Activated CD4-positive, alpha-beta T cell treated with anti-CD3 and anti-CD28 coated beads for 36 hours (primary cell): ENCODE measurements at regions of chr3 and their contacts with region 1.

Region 1: DNA sequence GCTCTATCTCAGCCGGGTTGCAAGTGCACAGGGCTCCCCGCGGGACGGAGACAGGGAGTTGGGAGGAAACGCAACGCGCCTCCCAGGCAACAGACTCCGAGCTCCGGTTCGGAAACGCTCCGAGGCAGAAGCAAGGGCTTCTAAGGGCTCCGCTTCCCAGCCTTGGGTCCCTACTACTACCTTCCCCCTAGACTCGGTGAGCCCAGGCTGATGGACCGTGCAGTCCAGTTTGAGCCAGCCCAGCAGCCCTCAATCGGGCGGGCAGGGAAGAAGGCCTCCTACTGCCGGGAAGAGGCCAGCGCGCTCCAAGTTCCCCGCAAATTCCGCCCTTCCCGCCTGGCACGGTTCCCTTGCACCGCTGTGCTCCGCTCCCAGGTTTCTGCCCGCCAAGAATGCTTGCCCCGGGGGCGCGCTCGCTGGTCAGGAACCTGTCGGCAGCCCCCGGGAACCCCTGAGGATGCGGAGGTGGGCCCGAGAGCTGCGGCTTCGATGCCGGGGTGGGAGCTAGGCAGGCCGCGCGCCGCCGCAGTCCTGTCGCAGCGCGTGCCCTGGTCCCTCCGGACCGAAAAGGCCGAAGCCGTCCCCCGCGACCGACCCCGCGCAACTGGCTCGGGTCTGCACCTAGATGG is 728 bp downstream of the TRANK1 start:
- DNase-seq: peak; percentile 55
- ATAC-seq: peak; percentile 45
- H3K4me3 Mint-ChIP-seq: peak overlapping the region; percentile 75
- H3K27ac Mint-ChIP-seq: peak overlapping the region; percentile 51
- H3K4me1 Mint-ChIP-seq: peaks cover 11% of the 10 kb centered on the region
- H3K27me3 Mint-ChIP-seq: no peaks in the 10 kb centered on the region

Region 2: DNA sequence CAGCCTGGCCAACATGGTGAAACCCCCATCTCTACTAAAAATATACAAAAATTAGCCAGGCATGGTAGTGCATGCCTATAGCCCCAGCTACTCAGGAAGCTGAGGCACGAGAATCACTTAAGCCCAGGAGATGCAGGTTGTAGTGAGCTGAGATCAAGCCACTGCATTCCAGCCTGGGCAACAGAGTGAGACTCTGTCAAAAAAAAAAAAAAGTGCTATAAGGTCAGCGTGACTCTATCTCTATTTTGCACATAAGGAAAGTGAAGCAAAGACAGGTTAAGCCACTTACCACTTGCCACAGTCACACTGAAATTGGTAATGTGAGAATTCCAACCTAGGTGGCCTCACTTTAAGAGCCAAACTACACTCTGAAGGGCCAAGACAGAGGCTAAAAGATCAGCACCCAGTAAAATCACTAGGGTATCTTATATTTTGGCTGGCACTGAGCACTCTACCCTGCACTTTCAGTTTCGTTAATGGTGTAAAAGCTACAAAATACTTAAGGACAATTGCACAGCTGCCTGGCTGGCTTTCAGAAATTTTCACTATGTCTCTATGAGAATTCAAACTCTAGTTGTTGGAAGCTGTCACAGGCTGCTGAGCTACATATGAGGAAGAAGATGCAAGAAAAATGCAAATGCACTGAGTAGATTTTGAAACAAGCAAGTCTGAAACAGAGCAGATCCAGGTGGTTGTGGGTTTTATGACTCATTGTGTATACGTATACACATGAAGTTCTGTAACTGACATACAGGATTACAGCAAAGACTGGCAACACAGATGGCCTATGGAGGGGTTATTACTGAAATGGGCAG is 31.9 kb before region 1 on chr3:
- CTCF ChIA-PET with region 1: interaction called, 3 read pairs
- POLR2A ChIA-PET with region 1: interaction called, 4 read pairs
- intact Hi-C with region 1: loop called (anchors 1 to 2 kb)
- DNase-seq: peak; percentile 57
- ATAC-seq: peak; percentile 87
- H3K4me3 Mint-ChIP-seq: peak overlapping the region; percentile 61
- H3K27ac Mint-ChIP-seq: peak overlapping the region; percentile 85
- H3K4me1 Mint-ChIP-seq: peaks cover 44% of the 10 kb centered on the region
- H3K27me3 Mint-ChIP-seq: peaks cover 2% of the 10 kb centered on the region

Region 3: GRCh38 chr3:36993326-36994283 is 49.5 kb after region 1 on chr3 and contains the start of gene MLH1:
- CTCF ChIA-PET with region 1: interaction called, 3 read pairs
- POLR2A ChIA-PET with region 1: interaction called, 9 read pairs
- intact Hi-C with region 1: loop called in 1 of 2 experiments (anchors 2 kb)
- DNase-seq: peak; percentile 98
- ATAC-seq: peak; percentile 90
- H3K4me3 Mint-ChIP-seq: no peak within 1 kb of the TSS
- H3K27ac Mint-ChIP-seq: no peak within 1 kb of the TSS
- H3K4me1 Mint-ChIP-seq: peaks cover 43% of the 10 kb centered on the region
- H3K27me3 Mint-ChIP-seq: no peaks in the 10 kb centered on the region
- total RNA-seq, gene MLH1: 89.0 to 135 TPM

Region 4: GRCh38 chr3:37024092-37024491 is 80.0 kb after region 1 on chr3:
- CTCF ChIA-PET with region 1: no interaction called
- POLR2A ChIA-PET with region 1: no interaction called
- intact Hi-C with region 1: no loop called
- DNase-seq: no peak
- ATAC-seq: peak; percentile 42
- H3K4me3 Mint-ChIP-seq: no peak overlapping the region
- H3K27ac Mint-ChIP-seq: no peak overlapping the region
- H3K4me1 Mint-ChIP-seq: peaks cover 4% of the 10 kb centered on the region
- H3K27me3 Mint-ChIP-seq: no peaks in the 10 kb centered on the region